GM13976 (cell line): ENCODE measurements at regions of chr3 and their contacts with region 1.

Region 1: GRCh38 chr3:128497387-128498126 is 4.6 kb upstream of the GATA2 start:
- DNase-seq: peak; percentile 84
- CTCF ChIP-seq: peak; percentile 66

Region 2: DNA sequence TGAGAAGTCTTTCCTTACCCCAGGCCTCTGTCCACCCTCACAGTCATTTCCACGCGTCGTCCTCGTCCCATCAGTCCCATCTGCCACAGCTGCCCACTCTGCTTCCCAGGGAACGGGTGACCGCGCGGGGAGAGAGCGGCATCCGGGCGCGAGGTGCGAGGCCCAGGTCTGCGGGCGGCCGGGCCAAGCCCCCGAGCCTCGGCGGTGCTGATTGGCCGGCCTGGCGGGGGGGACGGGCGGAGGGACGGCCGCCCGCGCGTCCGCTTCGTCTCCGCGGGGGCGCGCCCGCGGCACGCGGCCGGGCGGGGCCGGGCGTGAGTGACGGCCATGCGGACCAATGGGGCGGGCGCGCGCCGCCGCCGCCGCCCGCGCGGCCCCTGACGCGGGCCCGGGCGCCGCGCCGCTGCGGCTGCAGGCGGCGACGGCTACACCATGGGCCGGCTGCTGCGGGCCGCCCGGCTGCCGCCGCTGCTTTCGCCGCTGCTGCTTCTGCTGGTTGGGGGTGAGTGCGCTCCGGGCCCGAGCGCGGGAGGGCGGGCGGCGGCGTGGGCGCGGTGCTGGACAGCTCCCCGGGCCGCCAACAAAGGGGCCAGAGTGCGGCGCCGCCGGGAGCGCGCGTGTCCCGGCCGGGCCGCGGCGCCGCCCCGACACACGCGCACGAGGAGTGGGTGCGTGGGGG is 868.6 kb before region 1 on chr3 and contains the start of gene PODXL2:
- in situ Hi-C with region 1: no loop called
- DNase-seq: peak; percentile 81
- CTCF ChIP-seq: no peak

Region 3: GRCh38 chr3:128426128-128426921 is 71.2 kb before region 1 on chr3:
- in situ Hi-C with region 1: loop called (anchors 10 kb)
- DNase-seq: peak; percentile 96
- CTCF ChIP-seq: peak; percentile 99

Region 4: GRCh38 chr3:128665362-128666038 is 167.9 kb after region 1 on chr3:
- in situ Hi-C with region 1: no loop called
- DNase-seq: no peak
- CTCF ChIP-seq: no peak